Adrenal gland (tissue), 19 donors: ENCODE measurements at regions of chr18 and their contacts with region 1.

Region 1: DNA sequence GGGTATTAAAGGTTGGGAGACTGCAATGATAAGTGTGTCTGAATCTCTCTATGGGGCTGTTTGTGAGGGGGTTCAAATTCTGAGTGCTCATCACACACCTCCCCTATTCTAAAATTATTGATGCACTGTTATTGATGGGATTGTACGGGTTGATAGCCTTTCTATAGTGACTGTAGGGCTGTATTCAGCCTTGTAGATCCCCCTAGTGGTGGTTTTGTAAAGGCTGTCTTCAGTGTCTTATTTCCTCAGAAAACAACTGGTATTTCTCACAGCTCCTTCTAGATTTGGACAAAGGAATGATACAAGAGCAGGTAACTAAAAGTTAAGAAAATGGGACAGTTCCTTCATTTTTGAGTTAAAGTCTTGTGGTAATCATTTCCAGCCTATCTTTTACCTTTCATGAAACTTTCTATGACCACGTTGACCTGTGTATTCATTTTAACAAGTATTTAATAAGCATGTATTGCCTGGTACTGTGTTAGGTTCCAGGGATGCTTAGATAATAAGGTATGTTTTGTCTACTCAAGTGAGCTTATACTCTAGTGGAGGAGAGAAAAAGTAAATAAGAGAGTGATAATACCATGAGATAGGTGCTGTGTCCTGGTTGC is 21.2 kb downstream of the SMAD4 start:
- DNase-seq: peak in 1 of 7 donors; percentile 24
- H3K4me3 ChIP-seq: no peak overlapping the region
- H3K27ac ChIP-seq: no peak overlapping the region
- H3K4me1 ChIP-seq: peaks cover 0 to 3% of the 10 kb centered on the region in 2 donors
- H3K27me3 ChIP-seq: no peaks in the 10 kb centered on the region
- CTCF ChIP-seq: peak; percentile 59 to 85 (median 73)
- POLR2A ChIP-seq: no peak

Region 2: GRCh38 chr18:50819728-50820378 is 231.4 kb before region 1 on chr18 and contains the start of gene MRO:
- intact Hi-C with region 1: loop called in 1 of 2 experiments (anchors 5 kb)
- DNase-seq: peak; percentile 80 to 97 (median 88)
- H3K4me3 ChIP-seq: peak within 1 kb of the TSS in 2 of 4 donors; percentile 23 to 51
- H3K27ac ChIP-seq: peak within 1 kb of the TSS; percentile 1 to 81 (median 61)
- H3K4me1 ChIP-seq: peaks cover 8 to 25% of the 10 kb centered on the region in 2 donors
- H3K27me3 ChIP-seq: no peaks in the 10 kb centered on the region
- CTCF ChIP-seq: peak; percentile 84 to 95 (median 94)
- POLR2A ChIP-seq: no peak
- total RNA-seq, gene MRO: 1.1 to 9.4 (median 3.8) TPM

Region 3: GRCh38 chr18:50944245-50944932 is 106.8 kb before region 1 on chr18:
- intact Hi-C with region 1: no loop called
- DNase-seq: peak in 2 of 7 donors; percentile 7 to 30
- H3K4me3 ChIP-seq: no peak overlapping the region
- H3K27ac ChIP-seq: peak overlapping the region in 2 of 5 donors; percentile 17 to 47
- H3K4me1 ChIP-seq: no peaks in the 10 kb centered on the region
- H3K27me3 ChIP-seq: no peaks in the 10 kb centered on the region
- CTCF ChIP-seq: no peak
- POLR2A ChIP-seq: no peak